ENCODE measurements at regions of chrX and their contacts with region 1.

Region 1: GRCh38 chrX:30652527-30653414 is 452 bp upstream of the GK start:
- DNase-seq: peak; percentile 91 to 92
- ATAC-seq: peak; percentile 88 to 97 (median 89)
- H3K4me3 ChIP-seq: peak overlapping the region; percentile 93
- H3K4me3 Mint-ChIP-seq: peak overlapping the region; percentile 89
- H3K27ac ChIP-seq: peak overlapping the region; percentile 90
- H3K27ac Mint-ChIP-seq: peak overlapping the region; percentile 79 to 89
- H3K4me1 ChIP-seq: peaks cover 8% of the 10 kb centered on the region
- H3K4me1 Mint-ChIP-seq: peaks cover 5 to 15% of the 10 kb centered on the region in 2 donors
- H3K27me3 ChIP-seq: no peaks in the 10 kb centered on the region
- H3K27me3 Mint-ChIP-seq: no peaks in the 10 kb centered on the region
- CTCF ChIP-seq: no peak

Region 2: GRCh38 chrX:30577362-30577991 is 75.3 kb before region 1 on chrX and contains the start of gene TASL:
- intact Hi-C with region 1: loop called (anchors 5 kb)
- DNase-seq: peak; percentile 17 to 69
- ATAC-seq: peak; percentile 87 to 92 (median 88)
- H3K4me3 ChIP-seq: peak within 1 kb of the TSS; percentile 49
- H3K4me3 Mint-ChIP-seq: peak within 1 kb of the TSS; percentile 90
- H3K27ac ChIP-seq: peak within 1 kb of the TSS; percentile 83
- H3K27ac Mint-ChIP-seq: peak within 1 kb of the TSS; percentile 89 to 91
- H3K4me1 ChIP-seq: peaks cover 8% of the 10 kb centered on the region
- H3K4me1 Mint-ChIP-seq: peaks cover 13 to 16% of the 10 kb centered on the region in 2 donors
- H3K27me3 ChIP-seq: no peaks in the 10 kb centered on the region
- H3K27me3 Mint-ChIP-seq: no peaks in the 10 kb centered on the region
- CTCF ChIP-seq: no peak
- total RNA-seq, gene TASL: 2.2 to 4.7 (median 4.0) TPM

Region 3: DNA sequence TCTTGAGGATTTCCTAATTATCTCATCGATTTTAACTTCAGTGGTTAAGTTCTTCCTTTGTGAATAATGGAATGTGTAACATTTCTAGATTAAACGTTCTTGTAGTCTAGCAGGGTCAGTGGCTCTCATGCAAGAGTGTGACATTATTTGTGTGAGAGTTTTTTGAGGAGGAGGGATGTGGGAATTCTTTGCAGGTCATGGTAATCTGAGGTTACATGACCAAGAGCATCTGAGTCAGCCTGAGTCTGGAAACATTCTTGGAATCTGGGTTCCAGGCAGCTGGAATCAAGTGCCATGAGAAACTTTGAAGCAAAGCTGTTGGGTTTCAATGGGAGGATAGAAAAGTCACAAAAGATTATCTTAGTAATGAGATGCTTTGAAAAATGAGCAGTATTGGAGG is 50.0 kb after region 1 on chrX:
- intact Hi-C with region 1: no loop called
- DNase-seq: no peak
- ATAC-seq: no peak
- H3K4me3 ChIP-seq: no peak overlapping the region
- H3K4me3 Mint-ChIP-seq: no peak overlapping the region
- H3K27ac ChIP-seq: no peak overlapping the region
- H3K27ac Mint-ChIP-seq: no peak overlapping the region
- H3K4me1 ChIP-seq: no peaks in the 10 kb centered on the region
- H3K4me1 Mint-ChIP-seq: no peaks in the 10 kb centered on the region
- H3K27me3 ChIP-seq: no peaks in the 10 kb centered on the region
- H3K27me3 Mint-ChIP-seq: no peaks in the 10 kb centered on the region
- CTCF ChIP-seq: no peak

Region 4: DNA sequence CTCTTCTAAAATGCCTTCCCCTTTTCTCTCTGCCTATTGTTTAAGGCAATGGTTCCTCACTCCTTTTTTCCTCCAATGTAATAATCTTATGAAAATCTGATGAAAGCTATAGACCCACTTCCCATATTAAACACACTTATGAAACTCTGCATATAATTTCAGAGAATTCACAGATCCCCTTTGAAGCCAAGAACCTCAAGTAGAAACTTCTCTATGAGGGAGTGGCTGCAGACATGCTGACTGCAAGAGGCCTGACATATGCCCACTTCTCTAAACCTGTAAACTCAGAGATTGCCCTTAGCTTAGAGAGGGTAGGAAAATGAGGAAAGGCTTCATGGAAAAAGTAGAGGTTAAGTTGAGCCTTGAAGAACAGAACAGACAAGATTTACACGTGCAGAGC is 198.7 kb after region 1 on chrX:
- intact Hi-C with region 1: no loop called
- DNase-seq: no peak
- ATAC-seq: no peak
- H3K4me3 ChIP-seq: no peak overlapping the region
- H3K4me3 Mint-ChIP-seq: no peak overlapping the region
- H3K27ac ChIP-seq: no peak overlapping the region
- H3K27ac Mint-ChIP-seq: no peak overlapping the region
- H3K4me1 ChIP-seq: no peaks in the 10 kb centered on the region
- H3K4me1 Mint-ChIP-seq: no peaks in the 10 kb centered on the region
- H3K27me3 ChIP-seq: no peaks in the 10 kb centered on the region
- H3K27me3 Mint-ChIP-seq: no peaks in the 10 kb centered on the region
- CTCF ChIP-seq: no peak

Region 5: GRCh38 chrX:30981968-30982367 is 329.2 kb after region 1 on chrX:
- intact Hi-C with region 1: no loop called
- DNase-seq: no peak
- ATAC-seq: no peak
- H3K4me3 ChIP-seq: no peak overlapping the region
- H3K4me3 Mint-ChIP-seq: no peak overlapping the region
- H3K27ac ChIP-seq: no peak overlapping the region
- H3K27ac Mint-ChIP-seq: no peak overlapping the region
- H3K4me1 ChIP-seq: no peaks in the 10 kb centered on the region
- H3K4me1 Mint-ChIP-seq: no peaks in the 10 kb centered on the region
- H3K27me3 ChIP-seq: no peaks in the 10 kb centered on the region
- H3K27me3 Mint-ChIP-seq: peaks cover 0 to 7% of the 10 kb centered on the region in 2 donors
- CTCF ChIP-seq: no peak